ENCODE measurements at regions of chrX and their contacts with region 1.

Region 1: GRCh38 chrX:18617407-18617750 is 54.5 kb downstream of the RS1 start:
- DNase-seq: peak; percentile 67
- H3K4me3 Mint-ChIP-seq: peak overlapping the region; percentile 55
- H3K27ac Mint-ChIP-seq: peak overlapping the region; percentile 91
- H3K4me1 Mint-ChIP-seq: peaks cover 29% of the 10 kb centered on the region
- H3K27me3 Mint-ChIP-seq: no peaks in the 10 kb centered on the region
- CTCF ChIP-seq: no peak

Region 2: DNA sequence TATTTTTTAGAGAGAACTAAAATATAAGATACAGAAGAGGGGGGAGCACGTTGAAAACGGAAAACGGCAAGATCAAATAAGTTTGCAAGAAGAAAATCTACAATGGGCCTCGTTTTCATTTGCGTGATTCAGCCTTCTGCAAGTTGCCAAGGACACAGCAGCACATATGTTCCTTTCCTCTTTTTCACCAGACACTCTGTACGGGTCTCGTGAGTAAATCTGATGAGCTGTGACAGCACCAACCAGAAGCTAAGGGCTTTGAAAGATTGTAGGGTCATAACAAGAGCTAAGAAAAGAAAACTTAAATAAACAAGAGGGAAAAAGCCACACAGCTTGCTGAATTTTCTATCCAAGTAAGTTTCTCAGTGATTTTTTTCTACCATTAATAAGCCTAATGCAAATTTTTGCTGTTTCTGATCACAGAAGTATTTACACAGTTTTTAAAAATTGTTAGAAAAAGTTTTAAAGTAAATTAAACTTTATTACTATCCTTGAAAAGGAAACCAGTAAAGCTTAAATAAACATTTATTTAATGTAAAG is 326.3 kb before region 1 on chrX:
- CTCF ChIA-PET with region 1: interaction called, 12 read pairs
- intact Hi-C with region 1: no loop called
- DNase-seq: no peak
- H3K4me3 Mint-ChIP-seq: no peak overlapping the region
- H3K27ac Mint-ChIP-seq: no peak overlapping the region
- H3K4me1 Mint-ChIP-seq: no peaks in the 10 kb centered on the region
- H3K27me3 Mint-ChIP-seq: peaks cover 25% of the 10 kb centered on the region
- CTCF ChIP-seq: no peak

Region 3: GRCh38 chrX:18425199-18426003 is 192.0 kb before region 1 on chrX and contains the start of gene CDKL5:
- CTCF ChIA-PET with region 1: no interaction called
- intact Hi-C with region 1: loop called (anchors 5 kb)
- DNase-seq: peak; percentile 98
- H3K4me3 Mint-ChIP-seq: peak within 1 kb of the TSS; percentile 89
- H3K27ac Mint-ChIP-seq: peak within 1 kb of the TSS; percentile 78
- H3K4me1 Mint-ChIP-seq: peaks cover 21% of the 10 kb centered on the region
- H3K27me3 Mint-ChIP-seq: no peaks in the 10 kb centered on the region
- CTCF ChIP-seq: no peak
- total RNA-seq, gene CDKL5: 17.7 and 20.9 TPM in 2 replicates

Measured in Calu3 (cell line).